Head of caudate nucleus (tissue), 42 donors: ENCODE measurements at regions of chr6 and their contacts with region 1.

Region 1: GRCh38 chr6:122381497-122382265 is 17.8 kb upstream of the HSF2 start:
- DNase-seq: peak; percentile 21 to 88 (median 65)

Region 2: GRCh38 chr6:122530440-122531046 is 148.9 kb after region 1 on chr6:
- intact Hi-C with region 1: loop called (anchors 5 kb)
- DNase-seq: peak in 28 of 42 donors; percentile 13 to 86 (median 56)